ENCODE measurements at regions of chr20 and their contacts with region 1.

Region 1: GRCh38 chr20:23367770-23368169 is 5.8 kb downstream of the GZF1 start:
- DNase-seq: no peak
- H3K4me3 ChIP-seq: no peak overlapping the region
- H3K27ac ChIP-seq: no peak overlapping the region
- H3K4me1 ChIP-seq: peaks cover 33% of the 10 kb centered on the region
- CTCF ChIP-seq: no peak

Region 2: GRCh38 chr20:23009636-23010035 is 358.1 kb before region 1 on chr20:
- CTCF ChIA-PET with region 1: no interaction called
- POLR2A ChIA-PET with region 1: no interaction called
- intact Hi-C with region 1: no loop called
- DNase-seq: no peak
- H3K4me3 ChIP-seq: no peak overlapping the region
- H3K27ac ChIP-seq: no peak overlapping the region
- H3K4me1 ChIP-seq: no peaks in the 10 kb centered on the region
- CTCF ChIP-seq: no peak

Region 3: GRCh38 chr20:23386304-23387117 is 18.7 kb after region 1 on chr20:
- CTCF ChIA-PET with region 1: no interaction called
- POLR2A ChIA-PET with region 1: interaction called, 4 read pairs
- intact Hi-C with region 1: loop called (anchors 2 kb)
- DNase-seq: no peak
- H3K4me3 ChIP-seq: no peak overlapping the region
- H3K27ac ChIP-seq: no peak overlapping the region
- H3K4me1 ChIP-seq: peaks cover 17% of the 10 kb centered on the region
- CTCF ChIP-seq: no peak